CD4-positive, alpha-beta memory T cell (primary cell): ENCODE measurements at regions of chr4 and their contacts with region 1.

Region 1: DNA sequence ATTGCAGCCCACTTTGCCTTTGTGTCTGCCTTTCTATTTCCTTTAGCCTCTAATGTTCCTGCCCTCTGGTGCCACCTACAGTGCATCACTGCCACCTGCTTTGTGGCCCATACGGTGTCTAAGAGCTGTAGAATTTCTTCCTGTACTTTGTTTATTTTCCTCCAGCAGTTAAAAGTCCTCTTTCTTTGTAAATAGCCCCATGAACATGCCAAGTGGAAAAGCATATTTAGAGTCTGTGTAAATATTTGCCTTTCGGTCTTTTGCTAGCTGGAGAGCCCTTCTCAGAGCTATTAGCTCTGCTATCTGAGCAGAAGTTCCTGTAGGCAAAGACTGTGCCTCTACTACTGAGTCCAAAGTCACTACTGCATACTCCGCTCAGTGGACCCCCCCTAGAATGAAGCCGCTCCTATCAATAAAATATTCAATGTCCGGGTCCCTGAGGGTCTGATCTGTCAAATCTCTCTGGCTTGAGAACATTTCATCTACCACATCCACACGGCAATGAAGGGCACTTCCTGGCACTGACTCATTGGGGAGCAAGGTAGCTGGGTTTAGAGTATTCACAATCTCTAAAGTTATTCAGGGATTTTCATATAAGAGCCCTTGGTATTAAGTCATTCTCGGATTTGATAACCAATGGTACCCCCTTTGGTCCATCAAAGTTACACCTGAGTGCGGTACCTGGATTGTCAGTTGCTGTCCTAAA is 36.3 kb downstream of the SULT1E1 start:
- DNase-seq: peak in 4 of 5 donors; percentile 40 to 44 (median 43)
- H3K4me3 ChIP-seq: no peak overlapping the region
- H3K4me3 Mint-ChIP-seq: no peak overlapping the region
- H3K27ac ChIP-seq: no peak overlapping the region
- H3K27ac Mint-ChIP-seq: peak overlapping the region in 4 of 7 donors; percentile 1 to 74 (median 57)
- H3K4me1 ChIP-seq: no peaks in the 10 kb centered on the region
- H3K4me1 Mint-ChIP-seq: peaks cover 2 to 5% (median 4%) of the 10 kb centered on the region in 4 donors
- H3K27me3 ChIP-seq: no peaks in the 10 kb centered on the region
- H3K27me3 Mint-ChIP-seq: no peaks in the 10 kb centered on the region

Region 2: DNA sequence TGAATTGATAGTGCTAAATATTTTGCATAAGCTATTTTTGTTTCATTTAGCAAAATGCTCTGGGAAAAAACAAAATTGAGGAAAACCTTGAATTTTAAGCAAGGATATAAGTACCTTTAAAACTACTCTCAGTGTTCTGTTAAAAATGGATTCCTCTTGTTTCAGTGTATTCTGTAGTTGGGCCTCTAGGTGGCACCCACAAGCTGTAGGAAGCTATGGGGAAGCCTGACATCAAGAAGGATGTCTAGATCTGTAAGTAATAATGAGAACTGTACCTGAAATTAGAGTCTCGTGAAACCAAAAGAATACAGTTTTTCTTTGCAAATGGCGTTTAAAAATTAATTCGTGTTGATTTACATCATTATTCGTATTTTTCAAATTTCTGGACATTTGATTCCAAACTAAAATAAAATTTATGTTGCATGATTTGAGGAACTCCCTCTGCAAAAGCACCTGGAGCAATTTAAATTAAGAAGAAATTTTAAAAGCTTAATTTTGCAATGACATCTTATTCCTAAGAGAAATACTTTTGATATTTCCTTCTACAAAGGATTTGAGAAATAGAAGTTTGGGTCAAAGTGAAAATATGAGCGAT is 1325.1 kb before region 1 on chr4:
- CTCF ChIA-PET with region 1: no interaction called
- POLR2A ChIA-PET with region 1: no interaction called
- intact Hi-C with region 1: loop called (anchors 2 kb)
- DNase-seq: peak; percentile 49 to 64 (median 53)
- H3K4me3 ChIP-seq: no peak overlapping the region
- H3K4me3 Mint-ChIP-seq: no peak overlapping the region
- H3K27ac ChIP-seq: no peak overlapping the region
- H3K27ac Mint-ChIP-seq: no peak overlapping the region
- H3K4me1 ChIP-seq: no peaks in the 10 kb centered on the region
- H3K4me1 Mint-ChIP-seq: peaks cover 4 to 9% (median 5%) of the 10 kb centered on the region in 4 donors
- H3K27me3 ChIP-seq: no peaks in the 10 kb centered on the region
- H3K27me3 Mint-ChIP-seq: no peaks in the 10 kb centered on the region

Region 3: GRCh38 chr4:69689599-69689998 is 134.0 kb before region 1 on chr4:
- CTCF ChIA-PET with region 1: interaction called, 27 read pairs
- POLR2A ChIA-PET with region 1: interaction called, 3 read pairs
- intact Hi-C with region 1: loop called (anchors 1 kb)
- DNase-seq: peak in 4 of 5 donors; percentile 12 to 38 (median 33)
- H3K4me3 ChIP-seq: no peak overlapping the region
- H3K4me3 Mint-ChIP-seq: peak overlapping the region in 3 of 8 donors; percentile 34 to 58 (median 45)
- H3K27ac ChIP-seq: no peak overlapping the region
- H3K27ac Mint-ChIP-seq: no peak overlapping the region
- H3K4me1 ChIP-seq: no peaks in the 10 kb centered on the region
- H3K4me1 Mint-ChIP-seq: peaks cover 0 to 5% (median 3%) of the 10 kb centered on the region in 4 donors
- H3K27me3 ChIP-seq: no peaks in the 10 kb centered on the region
- H3K27me3 Mint-ChIP-seq: no peaks in the 10 kb centered on the region

Region 4: DNA sequence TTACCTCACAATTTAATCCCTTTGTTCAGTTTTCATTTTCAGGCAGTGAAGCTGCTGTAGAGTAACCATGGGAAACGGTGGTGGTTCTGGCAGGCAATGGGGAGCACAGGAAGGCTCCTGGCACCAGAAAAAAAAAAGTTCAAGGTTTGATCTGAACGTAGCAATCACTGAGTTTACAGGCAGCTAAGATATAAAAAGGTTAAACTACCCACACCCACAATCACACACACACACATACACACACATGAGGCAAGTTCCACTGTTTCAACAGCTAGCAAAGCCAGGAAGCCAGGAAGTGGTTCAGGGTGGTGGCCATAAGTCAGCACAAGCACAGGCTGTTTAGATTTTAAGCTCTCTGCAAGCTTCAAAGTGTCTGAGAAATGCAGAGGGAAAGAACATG is 63.2 kb before region 1 on chr4 and contains the start of gene SULT1B1:
- CTCF ChIA-PET with region 1: interaction called, 22 read pairs
- POLR2A ChIA-PET with region 1: interaction called, 7 read pairs
- intact Hi-C with region 1: loop called (anchors 2 kb)
- DNase-seq: peak; percentile 62 to 73 (median 64)
- H3K4me3 ChIP-seq: peak within 1 kb of the TSS; percentile 13 to 22
- H3K4me3 Mint-ChIP-seq: peak within 1 kb of the TSS; percentile 83 to 94 (median 88)
- H3K27ac ChIP-seq: peak within 1 kb of the TSS; percentile 11
- H3K27ac Mint-ChIP-seq: peak within 1 kb of the TSS; percentile 80 to 93 (median 86)
- H3K4me1 ChIP-seq: peaks cover 49% of the 10 kb centered on the region
- H3K4me1 Mint-ChIP-seq: peaks cover 22 to 48% (median 30%) of the 10 kb centered on the region in 4 donors
- H3K27me3 ChIP-seq: no peaks in the 10 kb centered on the region
- H3K27me3 Mint-ChIP-seq: no peaks in the 10 kb centered on the region
- total RNA-seq, gene SULT1B1: 5.7 to 7.6 TPM

Region 5: GRCh38 chr4:69765751-69766150 is 57.9 kb before region 1 on chr4:
- CTCF ChIA-PET with region 1: interaction called, 22 read pairs
- POLR2A ChIA-PET with region 1: interaction called, 7 read pairs
- intact Hi-C with region 1: loop called (anchors 2 kb)
- DNase-seq: no peak
- H3K4me3 ChIP-seq: no peak overlapping the region
- H3K4me3 Mint-ChIP-seq: no peak overlapping the region
- H3K27ac ChIP-seq: no peak overlapping the region
- H3K27ac Mint-ChIP-seq: no peak overlapping the region
- H3K4me1 ChIP-seq: peaks cover 19% of the 10 kb centered on the region
- H3K4me1 Mint-ChIP-seq: peaks cover 11 to 27% (median 12%) of the 10 kb centered on the region in 4 donors
- H3K27me3 ChIP-seq: no peaks in the 10 kb centered on the region
- H3K27me3 Mint-ChIP-seq: no peaks in the 10 kb centered on the region

Region 6: DNA sequence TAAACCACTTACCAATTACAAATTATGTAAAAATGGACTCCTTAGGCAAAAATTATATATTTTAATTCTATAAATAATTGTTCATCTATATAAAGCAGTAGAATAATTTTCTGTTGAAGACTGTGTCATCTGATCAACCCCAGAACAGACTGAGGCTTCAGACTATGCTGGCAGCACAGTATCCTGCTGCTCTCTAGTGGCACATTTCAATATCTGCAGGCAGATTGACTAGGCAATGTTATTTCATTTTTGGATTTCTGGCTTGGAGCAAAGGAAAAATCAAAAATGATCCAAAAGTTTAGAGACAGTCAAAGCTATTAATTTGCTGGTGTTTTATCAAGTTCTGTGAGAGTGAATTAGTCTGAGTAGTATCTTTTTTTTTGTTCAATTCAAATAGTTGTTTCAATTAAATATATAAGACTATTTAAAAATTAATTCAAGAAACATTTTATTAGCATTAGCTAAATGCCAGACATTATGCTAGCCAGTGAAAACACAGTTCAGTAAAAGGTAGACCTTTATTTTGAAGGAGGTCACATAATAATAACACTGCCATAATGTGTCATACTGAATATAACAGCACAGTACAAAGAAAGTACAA is 57.6 kb after region 1 on chr4:
- CTCF ChIA-PET with region 1: interaction called, 16 read pairs
- POLR2A ChIA-PET with region 1: no interaction called
- intact Hi-C with region 1: loop called (anchors 1 kb)
- DNase-seq: peak in 4 of 5 donors; percentile 10 to 32 (median 25)
- H3K4me3 ChIP-seq: no peak overlapping the region
- H3K4me3 Mint-ChIP-seq: no peak overlapping the region
- H3K27ac ChIP-seq: no peak overlapping the region
- H3K27ac Mint-ChIP-seq: no peak overlapping the region
- H3K4me1 ChIP-seq: no peaks in the 10 kb centered on the region
- H3K4me1 Mint-ChIP-seq: no peaks in the 10 kb centered on the region
- H3K27me3 ChIP-seq: no peaks in the 10 kb centered on the region
- H3K27me3 Mint-ChIP-seq: no peaks in the 10 kb centered on the region

Region 7: DNA sequence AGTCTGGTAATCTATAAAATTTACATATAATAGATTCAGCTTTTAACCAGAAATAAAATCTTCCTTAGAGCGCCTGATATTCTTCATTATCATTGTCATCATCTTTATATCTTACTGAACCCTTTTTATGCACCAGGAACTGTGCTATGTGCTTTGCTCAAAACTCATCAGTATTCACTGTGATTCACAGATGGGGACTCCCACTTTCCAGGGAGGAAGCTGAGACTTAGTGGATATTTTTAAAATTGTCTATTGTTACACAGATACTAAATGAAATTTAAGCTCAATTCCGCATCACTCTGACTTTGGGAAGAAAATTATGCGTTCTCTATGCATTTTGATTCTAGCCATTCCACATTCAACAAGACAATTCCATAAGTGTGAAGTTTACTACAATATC is 71.1 kb after region 1 on chr4:
- CTCF ChIA-PET with region 1: no interaction called
- POLR2A ChIA-PET with region 1: no interaction called
- intact Hi-C with region 1: no loop called
- DNase-seq: no peak
- H3K4me3 ChIP-seq: no peak overlapping the region
- H3K4me3 Mint-ChIP-seq: no peak overlapping the region
- H3K27ac ChIP-seq: no peak overlapping the region
- H3K27ac Mint-ChIP-seq: no peak overlapping the region
- H3K4me1 ChIP-seq: no peaks in the 10 kb centered on the region
- H3K4me1 Mint-ChIP-seq: no peaks in the 10 kb centered on the region
- H3K27me3 ChIP-seq: no peaks in the 10 kb centered on the region
- H3K27me3 Mint-ChIP-seq: peaks cover 2% of the 10 kb centered on the region in 2 donors

Region 8: GRCh38 chr4:70505151-70505748 is 681.6 kb after region 1 on chr4:
- CTCF ChIA-PET with region 1: no interaction called
- POLR2A ChIA-PET with region 1: no interaction called
- intact Hi-C with region 1: loop called (anchors 1 kb)
- DNase-seq: peak in 4 of 5 donors; percentile 19 to 46 (median 28)
- H3K4me3 ChIP-seq: no peak overlapping the region
- H3K4me3 Mint-ChIP-seq: no peak overlapping the region
- H3K27ac ChIP-seq: no peak overlapping the region
- H3K27ac Mint-ChIP-seq: no peak overlapping the region
- H3K4me1 ChIP-seq: no peaks in the 10 kb centered on the region
- H3K4me1 Mint-ChIP-seq: no peaks in the 10 kb centered on the region
- H3K27me3 ChIP-seq: no peaks in the 10 kb centered on the region
- H3K27me3 Mint-ChIP-seq: peaks cover 0 to 2% of the 10 kb centered on the region in 2 donors